ENCODE measurements at regions of chr13 and their contacts with region 1.

Region 1: DNA sequence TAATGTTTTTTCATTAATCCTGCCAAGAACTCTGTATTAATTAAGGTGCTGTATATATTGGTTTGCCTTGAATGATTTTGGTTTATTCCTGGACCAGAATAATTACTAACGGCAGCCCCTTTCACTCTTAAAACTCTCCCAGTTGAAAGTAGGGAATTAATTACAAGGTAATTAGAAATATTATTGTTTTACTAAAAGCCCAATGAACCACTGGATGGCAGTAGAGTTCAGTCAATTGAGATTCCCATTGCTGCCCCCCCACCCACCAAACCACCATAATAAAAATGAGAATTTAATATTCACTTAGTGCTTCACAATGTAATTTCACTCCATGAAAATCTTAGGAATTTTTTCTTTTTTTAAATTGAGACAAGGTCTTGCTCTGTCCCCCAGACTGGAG is 13.7 kb downstream of the WBP4 start:
- DNase-seq: peak in 4 of 5 donors; percentile 37 to 52 (median 44)
- H3K4me3 ChIP-seq: no peak overlapping the region
- H3K4me3 Mint-ChIP-seq: no peak overlapping the region
- H3K27ac ChIP-seq: no peak overlapping the region
- H3K27ac Mint-ChIP-seq: no peak overlapping the region
- H3K4me1 ChIP-seq: no peaks in the 10 kb centered on the region
- H3K4me1 Mint-ChIP-seq: no peaks in the 10 kb centered on the region
- H3K27me3 ChIP-seq: no peaks in the 10 kb centered on the region
- H3K27me3 Mint-ChIP-seq: no peaks in the 10 kb centered on the region

Region 2: GRCh38 chr13:41182231-41182630 is 107.2 kb after region 1 on chr13:
- CTCF ChIA-PET with region 1: no interaction called
- POLR2A ChIA-PET with region 1: no interaction called
- intact Hi-C with region 1: no loop called
- DNase-seq: no peak
- H3K4me3 ChIP-seq: no peak overlapping the region
- H3K4me3 Mint-ChIP-seq: no peak overlapping the region
- H3K27ac ChIP-seq: no peak overlapping the region
- H3K27ac Mint-ChIP-seq: no peak overlapping the region
- H3K4me1 ChIP-seq: no peaks in the 10 kb centered on the region
- H3K4me1 Mint-ChIP-seq: no peaks in the 10 kb centered on the region
- H3K27me3 ChIP-seq: no peaks in the 10 kb centered on the region
- H3K27me3 Mint-ChIP-seq: peaks cover 0 to 1% of the 10 kb centered on the region in 2 donors

Region 3: GRCh38 chr13:41193919-41194824 is 119.1 kb after region 1 on chr13 and contains the start of gene KBTBD7:
- CTCF ChIA-PET with region 1: interaction called, 14 read pairs
- POLR2A ChIA-PET with region 1: interaction called, 4 read pairs
- intact Hi-C with region 1: no loop called
- DNase-seq: peak; percentile 83 to 90 (median 86)
- H3K4me3 ChIP-seq: peak within 1 kb of the TSS; percentile 18 to 94
- H3K4me3 Mint-ChIP-seq: peak within 1 kb of the TSS; percentile 93 to 97 (median 94)
- H3K27ac ChIP-seq: peak within 1 kb of the TSS; percentile 72
- H3K27ac Mint-ChIP-seq: peak within 1 kb of the TSS; percentile 72 to 97 (median 92)
- H3K4me1 ChIP-seq: peaks cover 29% of the 10 kb centered on the region
- H3K4me1 Mint-ChIP-seq: peaks cover 23 to 45% (median 33%) of the 10 kb centered on the region in 4 donors
- H3K27me3 ChIP-seq: no peaks in the 10 kb centered on the region
- H3K27me3 Mint-ChIP-seq: no peaks in the 10 kb centered on the region
- total RNA-seq, gene KBTBD7: 11.1 to 11.8 TPM

Region 4: GRCh38 chr13:41222259-41222852 is 147.3 kb after region 1 on chr13:
- CTCF ChIA-PET with region 1: interaction called, 31 read pairs
- POLR2A ChIA-PET with region 1: no interaction called
- intact Hi-C with region 1: loop called (anchors 1 kb)
- DNase-seq: peak; percentile 45 to 52 (median 50)
- H3K4me3 ChIP-seq: no peak overlapping the region
- H3K4me3 Mint-ChIP-seq: no peak overlapping the region
- H3K27ac ChIP-seq: no peak overlapping the region
- H3K27ac Mint-ChIP-seq: no peak overlapping the region
- H3K4me1 ChIP-seq: no peaks in the 10 kb centered on the region
- H3K4me1 Mint-ChIP-seq: peaks cover 0 to 2% (median 0%) of the 10 kb centered on the region in 4 donors
- H3K27me3 ChIP-seq: no peaks in the 10 kb centered on the region
- H3K27me3 Mint-ChIP-seq: no peaks in the 10 kb centered on the region